RWPE1 (cell line): ENCODE measurements at regions of chr17 and their contacts with region 1.

Region 1: DNA sequence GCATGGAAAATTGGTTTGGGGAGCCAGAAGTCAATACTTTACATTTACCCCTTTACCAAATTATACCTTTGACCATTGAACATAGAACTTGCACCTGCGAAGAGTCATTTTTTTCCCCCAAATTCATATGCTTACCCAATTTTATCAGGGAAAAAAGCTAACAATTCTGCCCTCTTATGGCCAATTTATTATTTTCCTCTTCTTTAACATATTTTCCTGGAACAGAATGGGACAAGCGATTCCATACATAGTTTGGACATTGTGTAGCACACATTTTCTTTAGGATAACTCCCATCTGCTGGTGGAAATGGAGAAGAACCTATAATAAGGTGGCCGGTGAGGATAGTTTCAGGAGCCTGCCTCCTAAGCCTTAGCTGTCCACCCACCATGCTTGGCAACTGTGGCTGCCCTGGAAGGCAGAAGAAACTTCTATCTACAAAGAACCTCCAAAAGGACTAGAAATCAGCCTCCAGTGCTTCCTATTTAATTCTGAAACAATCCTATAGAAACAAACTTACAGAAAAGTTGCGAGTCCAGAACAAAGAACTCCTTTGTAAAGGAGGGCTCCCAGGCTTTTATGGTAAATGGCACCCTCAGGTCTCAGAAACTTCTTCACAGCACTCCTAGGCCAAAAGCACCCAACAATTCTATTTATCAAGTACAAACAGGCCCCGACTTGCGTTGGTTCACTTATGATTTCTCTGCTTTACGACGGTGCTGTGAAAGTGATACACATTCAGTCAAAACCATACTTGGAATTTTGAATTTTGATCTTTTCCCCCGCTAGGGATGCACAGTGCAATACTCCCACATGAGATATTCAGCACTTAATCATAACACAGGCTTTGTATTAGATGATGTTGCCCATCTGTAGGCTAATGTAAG is 64.1 kb upstream of the CACNG4 start:
- DNase-seq: peak; percentile 44
- H3K27ac ChIP-seq: no peak overlapping the region
- CTCF ChIP-seq: peak; percentile 37

Region 2: DNA sequence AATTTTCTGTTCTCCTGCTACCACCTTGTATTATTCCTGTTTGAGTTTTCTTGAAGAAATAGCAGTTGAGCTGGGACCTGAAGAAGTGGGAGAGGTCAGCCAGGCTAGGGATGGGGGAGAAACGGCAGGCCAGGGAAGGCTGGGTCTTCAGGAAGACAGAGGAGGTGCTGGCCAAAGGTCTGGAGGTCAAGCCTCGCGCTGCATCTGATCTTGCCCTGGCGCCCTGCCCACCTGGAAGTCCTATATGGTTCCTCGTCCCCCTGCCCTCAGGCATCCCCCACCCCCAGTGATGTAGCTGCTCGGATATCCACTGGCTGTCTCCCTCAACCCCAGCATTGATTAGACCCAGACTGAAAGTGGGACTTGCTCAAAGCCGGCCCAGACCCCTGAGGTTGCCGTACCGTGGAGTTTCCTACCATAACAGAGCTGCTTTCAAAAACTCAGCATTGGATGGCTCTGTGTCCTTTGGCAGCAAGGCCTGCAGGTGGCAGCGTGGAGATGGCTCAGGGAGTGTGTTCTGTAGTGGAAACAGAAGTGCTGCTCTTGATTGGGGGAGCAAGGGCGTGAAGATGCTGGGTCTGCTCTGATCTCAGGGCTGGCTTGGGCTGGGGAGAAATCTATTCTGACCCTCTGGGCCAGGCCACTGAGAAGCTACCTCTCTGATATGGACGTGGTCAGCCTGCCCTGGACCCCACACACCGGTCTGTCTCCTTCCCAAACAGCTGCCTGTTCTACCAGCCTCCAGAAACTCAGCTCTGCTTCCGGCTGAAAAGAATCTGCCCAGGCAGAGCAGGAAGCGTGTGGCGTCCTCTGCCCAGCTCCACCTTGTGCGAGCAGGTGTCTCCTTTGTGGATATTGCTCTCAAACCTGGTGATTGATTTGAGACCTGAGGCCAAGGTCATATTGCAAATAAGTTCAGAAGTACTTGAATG is 172.5 kb before region 1 on chr17:
- CTCF ChIA-PET with region 1: interaction called, 10 read pairs
- POLR2A ChIA-PET with region 1: no interaction called
- DNase-seq: peak; percentile 68
- H3K27ac ChIP-seq: peak overlapping the region; percentile 41
- CTCF ChIP-seq: peak; percentile 74